ENCODE measurements at regions of chr7 and their contacts with region 1.

Region 1: GRCh38 chr7:158824028-158824427 is 5.3 kb downstream of the ESYT2 start:
- DNase-seq: peak; percentile 85
- H3K4me3 Mint-ChIP-seq: peak overlapping the region; percentile 42
- H3K27ac Mint-ChIP-seq: peak overlapping the region; percentile 76
- H3K4me1 Mint-ChIP-seq: peaks cover 67% of the 10 kb centered on the region
- H3K27me3 Mint-ChIP-seq: no peaks in the 10 kb centered on the region

Region 2: GRCh38 chr7:158836692-158837091 is 12.7 kb after region 1 on chr7:
- CTCF ChIA-PET with region 1: no interaction called
- POLR2A ChIA-PET with region 1: no interaction called
- DNase-seq: no peak
- H3K4me3 Mint-ChIP-seq: no peak overlapping the region
- H3K27ac Mint-ChIP-seq: no peak overlapping the region
- H3K4me1 Mint-ChIP-seq: peaks cover 4% of the 10 kb centered on the region
- H3K27me3 Mint-ChIP-seq: peaks cover 8% of the 10 kb centered on the region

Region 3: DNA sequence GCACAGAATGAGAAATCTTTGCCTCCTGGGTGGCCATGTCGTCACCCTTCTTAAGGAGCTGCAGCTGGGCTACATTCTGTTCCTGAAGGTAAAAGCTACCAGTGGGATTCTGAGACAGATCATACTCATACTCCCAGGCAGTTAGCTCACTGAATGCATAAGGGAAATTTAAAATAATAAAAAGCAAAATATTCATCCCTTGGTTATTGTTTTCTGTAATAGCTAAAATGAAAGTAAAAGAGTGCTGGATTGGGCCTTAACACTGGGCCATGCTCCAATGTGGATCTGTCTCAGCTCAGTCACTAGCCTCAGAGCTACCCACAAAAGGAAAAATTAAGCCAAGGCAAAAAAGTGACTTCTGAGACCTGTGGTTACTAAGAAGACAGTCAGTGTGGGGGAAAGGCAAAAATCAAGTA is 23.4 kb after region 1 on chr7:
- CTCF ChIA-PET with region 1: no interaction called
- POLR2A ChIA-PET with region 1: interaction called, 24 read pairs
- DNase-seq: peak; percentile 17
- H3K4me3 Mint-ChIP-seq: peak overlapping the region; percentile 73
- H3K27ac Mint-ChIP-seq: peak overlapping the region; percentile 88
- H3K4me1 Mint-ChIP-seq: peaks cover 26% of the 10 kb centered on the region
- H3K27me3 Mint-ChIP-seq: peaks cover 3% of the 10 kb centered on the region

Measured in activated CD4-positive, alpha-beta memory T cell treated with anti-CD3 and anti-CD28 coated beads, Interleukin-2, amount 10 ng/mL, durations not matched to agents 7 days and 5 days (primary cell).